ENCODE measurements at regions of chrX and their contacts with region 1.

Region 1: GRCh38 chrX:111568354-111568753 is 56.9 kb downstream of the SERTM2 start:
- DNase-seq: peak; percentile 12 to 29
- H3K4me3 ChIP-seq: no peak overlapping the region
- H3K4me3 Mint-ChIP-seq: no peak overlapping the region
- H3K27ac Mint-ChIP-seq: no peak overlapping the region
- H3K4me1 ChIP-seq: no peaks in the 10 kb centered on the region
- H3K4me1 Mint-ChIP-seq: no peaks in the 10 kb centered on the region
- H3K27me3 ChIP-seq: no peaks in the 10 kb centered on the region
- H3K27me3 Mint-ChIP-seq: no peaks in the 10 kb centered on the region
- CTCF ChIP-seq: peak; percentile 24 to 64

Region 2: DNA sequence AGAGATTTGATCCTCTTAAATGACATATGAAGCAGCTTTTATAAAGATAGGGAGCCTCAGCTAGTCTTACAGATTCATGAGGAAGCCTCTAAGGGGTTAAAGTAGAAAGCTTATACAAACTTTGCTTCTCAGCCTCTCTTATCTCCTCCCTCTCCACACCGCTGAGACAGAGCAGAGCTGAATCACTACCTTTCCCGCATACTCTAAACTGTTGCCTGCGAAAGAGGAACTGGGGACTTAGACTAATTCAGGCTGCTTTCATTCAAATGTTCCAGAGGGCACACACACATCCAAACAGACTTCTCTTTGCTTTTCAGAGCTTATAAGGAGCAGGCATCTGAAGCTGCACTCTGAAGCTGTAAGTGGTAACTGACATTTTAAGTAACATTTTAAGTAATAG is 56.9 kb before region 1 on chrX and contains the start of gene SERTM2:
- CTCF ChIA-PET with region 1: no interaction called
- POLR2A ChIA-PET with region 1: no interaction called
- intact Hi-C with region 1: loop called (anchors 10 kb)
- DNase-seq: peak; percentile 9 to 32
- H3K4me3 ChIP-seq: peak within 1 kb of the TSS; percentile 14
- H3K4me3 Mint-ChIP-seq: peak within 1 kb of the TSS; percentile 29
- H3K27ac Mint-ChIP-seq: no peak within 1 kb of the TSS
- H3K4me1 ChIP-seq: peaks cover under 1% of the 10 kb centered on the region; the same call in 1 of the 2 replicates
- H3K4me1 Mint-ChIP-seq: no peaks in the 10 kb centered on the region
- H3K27me3 ChIP-seq: no peaks in the 10 kb centered on the region
- H3K27me3 Mint-ChIP-seq: no peaks in the 10 kb centered on the region
- CTCF ChIP-seq: no peak
- total RNA-seq, gene SERTM2: 1.1 and 1.4 TPM in 2 replicates